ENCODE measurements at regions of chr3 and their contacts with region 1.

Region 1: DNA sequence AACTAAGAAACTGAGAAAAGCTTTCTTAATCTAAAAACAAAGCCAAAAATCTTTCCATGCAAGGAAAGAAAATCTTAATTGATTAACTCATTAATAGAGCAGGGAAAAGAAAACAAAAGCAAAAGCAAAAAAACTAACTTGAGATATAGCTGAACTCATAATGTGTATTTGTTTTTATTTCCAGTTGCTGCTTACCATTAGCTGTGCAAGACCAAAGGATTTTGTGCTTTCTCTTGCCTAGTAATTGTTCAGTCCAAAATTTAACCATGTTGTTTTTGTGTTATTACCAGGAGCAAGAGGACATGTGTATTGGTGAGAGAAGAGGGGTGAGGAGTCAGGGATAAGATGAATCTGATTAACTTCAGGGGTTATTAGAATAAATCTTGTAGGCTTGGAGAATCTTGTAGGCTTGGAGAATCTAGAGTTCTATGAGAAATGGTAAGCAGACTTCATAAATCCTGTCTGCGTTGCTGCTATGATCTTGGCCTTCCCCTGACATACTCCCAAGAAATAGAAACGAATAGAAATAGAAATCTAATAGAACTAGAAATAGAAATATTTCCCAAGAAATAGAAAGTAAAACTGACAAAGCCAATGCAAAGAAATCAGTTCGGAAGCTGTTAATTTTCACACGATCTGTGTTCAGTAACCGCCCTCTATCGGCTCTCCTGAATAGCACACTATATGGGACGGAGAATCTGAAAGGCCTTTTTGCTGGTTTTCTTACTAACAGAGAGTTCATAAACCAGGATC is 72.6 kb upstream of the TNFSF10 start:
- DNase-seq: peak; percentile 45 to 46
- ATAC-seq: peak; percentile 80 to 91
- H3K4me3 ChIP-seq: peak overlapping the region; percentile 19; the same call in 1 of the 3 replicates
- H3K27ac ChIP-seq: peak overlapping the region; percentile 29 to 33; a peak in 2 of 6 replicates
- H3K4me1 ChIP-seq: peaks cover 7% of the 10 kb centered on the region; the same call in 1 of the 3 replicates
- CTCF ChIP-seq: peak; percentile 80
- EP300 ChIP-seq: no peak
- POLR2A ChIP-seq: no peak
- RAD21 ChIP-seq: peak; percentile 80 to 82

Region 2: GRCh38 chr3:172562871-172563863 is 32.6 kb before region 1 on chr3:
- CTCF ChIA-PET with region 1: interaction called, 12 read pairs
- POLR2A ChIA-PET with region 1: no interaction called
- DNase-seq: peak in 1 of 2 experiments; percentile 67
- ATAC-seq: peak; percentile 77 to 81; a peak in 5 of 6 replicates
- H3K4me3 ChIP-seq: peak overlapping the region; percentile 28; the same call in 2 of the 3 replicates
- H3K27ac ChIP-seq: peak overlapping the region; percentile 76 to 79
- H3K4me1 ChIP-seq: peaks cover 48% of the 10 kb centered on the region
- CTCF ChIP-seq: no peak
- EP300 ChIP-seq: peak in 1 of 2 experiments; percentile 59; a peak in 2 of 5 replicates
- POLR2A ChIP-seq: no peak
- RAD21 ChIP-seq: no peak

Region 3: DNA sequence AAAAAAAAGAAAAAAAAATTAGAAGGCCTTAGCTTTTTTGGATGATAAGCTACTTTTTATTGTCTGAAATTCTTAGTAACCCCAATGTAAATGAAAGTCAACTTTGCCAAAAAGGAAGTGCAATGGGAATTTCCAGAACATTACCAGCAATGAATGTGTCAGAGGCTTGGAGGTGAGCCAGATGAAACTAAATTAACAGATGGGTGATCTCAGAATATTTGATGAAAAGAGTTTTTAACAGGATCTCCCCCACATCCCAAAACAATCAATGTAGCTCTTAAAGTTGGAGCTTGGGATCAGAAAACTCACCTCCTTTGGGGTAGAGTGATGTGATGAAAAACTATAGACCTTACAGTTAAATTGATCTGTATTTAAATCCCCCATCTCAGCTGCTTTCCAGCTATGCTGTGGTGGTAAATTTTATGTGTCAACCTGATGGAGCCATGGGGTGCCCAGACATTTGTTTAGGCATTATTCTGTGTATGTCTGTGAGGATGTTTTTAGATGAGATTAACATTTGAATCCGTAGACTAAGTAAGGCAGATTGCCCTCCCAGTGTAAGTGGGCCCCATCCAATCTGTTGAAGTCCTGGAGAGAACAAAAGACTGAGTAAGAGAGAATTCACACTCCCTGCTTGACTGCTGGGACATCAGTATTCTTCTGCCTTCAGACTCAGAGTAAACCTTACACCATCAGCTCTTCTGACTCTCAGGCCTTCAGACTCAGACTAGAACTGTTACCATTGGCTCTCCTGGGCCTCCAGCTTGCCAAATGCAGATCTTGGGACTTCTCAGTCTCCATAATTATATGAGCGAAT is 11.7 kb after region 1 on chr3:
- CTCF ChIA-PET with region 1: interaction called, 34 read pairs
- POLR2A ChIA-PET with region 1: no interaction called
- DNase-seq: no peak
- ATAC-seq: no peak
- H3K4me3 ChIP-seq: no peak overlapping the region
- H3K27ac ChIP-seq: peak overlapping the region in 1 of 2 experiments; percentile 29; a peak in 2 of 6 replicates
- H3K4me1 ChIP-seq: peaks cover 9% of the 10 kb centered on the region; the same call in 1 of the 3 replicates
- CTCF ChIP-seq: no peak
- EP300 ChIP-seq: no peak
- POLR2A ChIP-seq: no peak
- RAD21 ChIP-seq: no peak

Region 4: DNA sequence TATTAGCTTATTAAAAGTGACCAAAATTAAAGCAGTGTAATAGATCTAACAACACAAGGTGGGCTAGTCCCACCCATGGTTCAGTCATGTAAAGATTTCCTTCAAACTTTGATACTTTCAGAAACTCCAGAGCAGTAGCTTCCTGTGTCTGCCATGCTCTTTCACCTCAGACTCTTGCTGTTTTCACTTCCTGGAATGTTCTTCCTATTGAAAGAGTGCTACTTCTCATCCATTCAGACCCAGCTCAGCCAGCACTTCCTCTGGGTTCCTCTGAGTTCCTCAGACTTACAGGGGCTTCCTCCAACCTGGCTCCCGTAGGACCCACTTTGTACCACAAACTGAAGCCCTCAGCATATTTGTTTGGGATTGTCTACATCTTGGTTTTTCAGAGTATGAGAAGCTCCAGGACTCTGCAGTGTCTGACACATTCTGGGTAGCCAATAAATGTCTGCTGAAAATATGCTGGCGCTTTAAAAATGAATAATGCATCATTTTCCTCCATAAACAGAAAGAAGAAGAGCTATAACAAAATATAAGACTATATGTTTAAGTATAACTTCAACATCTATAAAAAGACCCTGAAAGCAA is 97.0 kb after region 1 on chr3:
- CTCF ChIA-PET with region 1: no interaction called
- POLR2A ChIA-PET with region 1: no interaction called
- DNase-seq: no peak
- ATAC-seq: no peak
- H3K4me3 ChIP-seq: no peak overlapping the region
- H3K27ac ChIP-seq: no peak overlapping the region
- H3K4me1 ChIP-seq: peaks cover 29% of the 10 kb centered on the region
- CTCF ChIP-seq: no peak
- EP300 ChIP-seq: no peak
- POLR2A ChIP-seq: no peak
- RAD21 ChIP-seq: no peak